ENCODE measurements at regions of chr13 and their contacts with region 1.

Region 1: GRCh38 chr13:28636674-28637317 is 22.1 kb upstream of the POMP start:
- DNase-seq: no peak
- ATAC-seq: peak in 2 of 4 donors; percentile 41 to 58
- H3K4me3 ChIP-seq: no peak overlapping the region
- H3K27ac ChIP-seq: no peak overlapping the region
- H3K4me1 ChIP-seq: no peaks in the 10 kb centered on the region
- H3K27me3 ChIP-seq: no peaks in the 10 kb centered on the region
- CTCF ChIP-seq: peak; percentile 59

Region 2: DNA sequence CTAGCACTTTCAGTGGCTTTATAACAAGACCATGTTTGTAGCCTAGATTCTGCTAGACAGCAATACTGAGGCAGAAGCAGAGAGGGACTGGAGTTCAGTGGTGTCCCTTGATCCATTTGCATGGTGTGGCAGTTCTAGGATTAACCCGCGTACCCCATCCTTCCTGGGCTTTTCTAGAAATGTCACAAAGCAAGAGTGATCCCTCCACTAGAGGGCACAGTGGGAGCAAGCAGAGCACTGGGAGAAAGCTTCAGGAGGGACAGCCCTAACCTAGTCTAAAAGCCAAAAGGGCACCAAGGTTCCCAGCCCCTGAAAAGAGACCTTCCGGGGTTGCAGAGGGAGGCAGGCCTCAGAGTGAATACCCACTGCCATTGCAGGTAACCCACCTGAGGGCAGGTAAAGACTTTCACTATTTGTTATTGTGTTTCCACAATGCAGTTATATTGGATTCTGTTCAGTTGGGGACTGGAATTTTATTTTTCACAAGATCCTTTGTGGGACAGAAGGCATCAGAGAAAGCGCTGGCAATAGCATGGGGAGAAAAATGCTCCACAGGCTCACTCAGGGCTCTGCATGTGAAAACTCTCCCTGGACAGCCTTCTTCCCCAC is 312.5 kb before region 1 on chr13:
- intact Hi-C with region 1: loop called (anchors 10 kb)
- DNase-seq: no peak
- ATAC-seq: peak in 3 of 4 donors; percentile 32 to 70 (median 70)
- H3K4me3 ChIP-seq: no peak overlapping the region
- H3K27ac ChIP-seq: no peak overlapping the region
- H3K4me1 ChIP-seq: peaks cover 4% of the 10 kb centered on the region
- H3K27me3 ChIP-seq: no peaks in the 10 kb centered on the region
- CTCF ChIP-seq: peak; percentile 65

Region 3: GRCh38 chr13:28531077-28531844 is 105.5 kb before region 1 on chr13:
- intact Hi-C with region 1: loop called in 1 of 2 experiments (anchors 10 kb)
- DNase-seq: peak; percentile 45 to 68
- ATAC-seq: peak; percentile 30 to 56 (median 38)
- H3K4me3 ChIP-seq: peak overlapping the region; percentile 59
- H3K27ac ChIP-seq: peak overlapping the region; percentile 50
- H3K4me1 ChIP-seq: no peaks in the 10 kb centered on the region
- H3K27me3 ChIP-seq: peaks cover 0 to 58% (median 4%) of the 10 kb centered on the region in 3 donors
- CTCF ChIP-seq: no peak

Region 4: GRCh38 chr13:28548872-28549271 is 87.9 kb before region 1 on chr13:
- intact Hi-C with region 1: no loop called
- DNase-seq: no peak
- ATAC-seq: no peak
- H3K4me3 ChIP-seq: no peak overlapping the region
- H3K27ac ChIP-seq: no peak overlapping the region
- H3K4me1 ChIP-seq: no peaks in the 10 kb centered on the region
- H3K27me3 ChIP-seq: no peaks in the 10 kb centered on the region
- CTCF ChIP-seq: no peak

Measured in psoas muscle (tissue), 8 donors.